Ovary (tissue), 10 donors: ENCODE measurements at regions of chrX and their contacts with region 1.

Region 1: GRCh38 chrX:40996886-40997530 is 88.2 kb upstream of the USP9X start:
- DNase-seq: no peak
- H3K4me3 ChIP-seq: no peak overlapping the region
- H3K27ac ChIP-seq: no peak overlapping the region
- H3K4me1 ChIP-seq: no peaks in the 10 kb centered on the region
- H3K27me3 ChIP-seq: no peaks in the 10 kb centered on the region
- CTCF ChIP-seq: no peak
- EP300 ChIP-seq: no peak
- POLR2A ChIP-seq: no peak

Region 2: DNA sequence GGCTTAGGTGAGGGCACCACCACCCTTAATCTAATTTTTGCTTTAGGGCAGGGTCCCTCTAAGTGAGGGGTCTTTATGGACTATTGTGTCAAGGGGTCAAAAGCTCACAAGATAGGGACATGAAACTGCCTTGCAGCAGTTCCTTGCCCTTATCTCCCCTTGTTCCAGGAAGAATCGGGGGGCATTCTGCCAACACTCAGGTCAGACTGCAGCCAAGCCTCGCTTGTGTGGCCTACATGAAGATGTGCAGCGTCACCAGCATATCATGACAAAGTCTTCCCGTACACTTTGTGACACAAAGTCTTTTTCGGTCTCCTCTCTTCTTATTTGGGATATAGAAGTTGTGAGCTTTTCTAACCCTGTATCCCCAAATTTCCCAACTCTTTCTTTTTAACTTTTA is 70.7 kb after region 1 on chrX:
- intact Hi-C with region 1: loop called in 1 of 4 experiments (anchors 2 kb)
- DNase-seq: no peak
- H3K4me3 ChIP-seq: no peak overlapping the region
- H3K27ac ChIP-seq: no peak overlapping the region
- H3K4me1 ChIP-seq: no peaks in the 10 kb centered on the region
- H3K27me3 ChIP-seq: no peaks in the 10 kb centered on the region
- CTCF ChIP-seq: no peak
- EP300 ChIP-seq: no peak
- POLR2A ChIP-seq: no peak

Region 3: DNA sequence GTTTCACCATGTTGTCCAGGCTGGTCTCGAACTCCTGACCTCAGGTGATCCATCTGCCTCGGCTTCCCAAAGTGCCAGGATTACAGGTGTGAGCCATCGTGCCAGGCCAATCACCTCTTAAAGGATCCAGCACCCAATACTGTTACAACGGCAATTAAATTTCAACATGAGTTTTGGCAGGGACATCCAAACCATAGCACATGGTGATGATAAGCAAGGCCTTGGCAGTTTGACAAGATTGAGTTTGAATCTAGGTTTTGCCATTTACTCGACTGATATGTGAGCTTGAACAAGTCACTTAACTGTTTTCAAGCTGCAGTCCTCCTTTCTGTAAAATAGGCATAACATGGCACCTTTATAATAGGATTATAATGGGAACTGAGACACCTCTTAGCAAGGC is 811.0 kb after region 1 on chrX:
- intact Hi-C with region 1: no loop called
- DNase-seq: no peak
- H3K4me3 ChIP-seq: no peak overlapping the region
- H3K27ac ChIP-seq: no peak overlapping the region
- H3K4me1 ChIP-seq: no peaks in the 10 kb centered on the region
- H3K27me3 ChIP-seq: no peaks in the 10 kb centered on the region
- CTCF ChIP-seq: no peak
- EP300 ChIP-seq: no peak
- POLR2A ChIP-seq: no peak